ENCODE measurements at regions of chr3 and their contacts with region 1.

Region 1: DNA sequence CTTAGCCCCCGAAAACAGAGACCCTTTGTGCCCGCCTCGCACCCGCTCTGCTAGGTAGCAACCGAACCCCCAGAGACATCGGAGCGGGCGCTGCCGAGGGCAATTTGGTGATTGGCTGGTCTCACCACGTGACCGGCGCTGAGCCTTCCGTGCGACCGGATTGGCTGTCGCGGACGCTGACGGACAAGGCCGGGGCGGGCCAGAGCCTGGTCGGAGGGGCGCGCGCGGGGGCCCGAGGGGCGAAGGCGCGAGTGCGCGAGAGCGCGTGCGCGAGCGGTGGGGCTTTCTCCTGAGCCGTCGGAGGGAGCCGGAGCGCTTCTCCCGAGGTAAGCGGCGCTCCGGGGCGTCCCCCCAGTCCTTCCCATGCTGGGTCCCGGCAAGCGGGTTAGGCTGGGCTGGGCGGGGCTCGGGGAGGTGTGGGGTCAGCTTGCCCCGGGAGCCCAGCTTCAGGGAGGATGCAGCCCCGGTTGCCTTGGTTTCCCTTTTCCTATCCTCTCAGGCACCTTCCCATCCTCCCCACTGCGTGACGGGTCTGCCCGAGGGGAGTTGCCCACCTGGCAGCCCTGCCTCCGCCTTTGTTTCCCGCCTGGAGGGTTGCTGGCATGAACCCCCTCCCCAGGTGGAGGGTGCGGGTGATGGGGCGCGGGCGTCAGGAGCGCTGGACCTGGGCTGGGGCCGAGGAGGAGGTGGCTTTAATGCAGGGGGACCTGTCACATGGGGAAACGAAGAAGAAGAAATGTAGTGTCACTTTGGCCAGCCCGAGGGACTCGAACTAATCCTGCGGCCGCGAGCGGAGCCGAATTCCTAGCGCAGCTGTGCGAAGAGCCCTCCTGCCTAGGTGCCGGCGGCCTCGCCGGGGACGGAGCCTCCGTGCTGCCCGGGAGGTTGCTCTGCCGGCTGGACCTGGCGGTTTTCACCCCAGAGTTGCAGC is at the start of gene TMEM108:
- DNase-seq: peak; percentile 41 to 73
- H3K4me3 ChIP-seq: peak within 1 kb of the TSS; percentile 52 to 62
- H3K27ac ChIP-seq: no peak within 1 kb of the TSS
- H3K4me1 ChIP-seq: peaks cover 0 to 30% (median 16%) of the 10 kb centered on the region in 4 donors
- H3K27me3 ChIP-seq: peaks cover 0 to 29% of the 10 kb centered on the region in 2 donors
- CTCF ChIP-seq: no peak

Region 2: DNA sequence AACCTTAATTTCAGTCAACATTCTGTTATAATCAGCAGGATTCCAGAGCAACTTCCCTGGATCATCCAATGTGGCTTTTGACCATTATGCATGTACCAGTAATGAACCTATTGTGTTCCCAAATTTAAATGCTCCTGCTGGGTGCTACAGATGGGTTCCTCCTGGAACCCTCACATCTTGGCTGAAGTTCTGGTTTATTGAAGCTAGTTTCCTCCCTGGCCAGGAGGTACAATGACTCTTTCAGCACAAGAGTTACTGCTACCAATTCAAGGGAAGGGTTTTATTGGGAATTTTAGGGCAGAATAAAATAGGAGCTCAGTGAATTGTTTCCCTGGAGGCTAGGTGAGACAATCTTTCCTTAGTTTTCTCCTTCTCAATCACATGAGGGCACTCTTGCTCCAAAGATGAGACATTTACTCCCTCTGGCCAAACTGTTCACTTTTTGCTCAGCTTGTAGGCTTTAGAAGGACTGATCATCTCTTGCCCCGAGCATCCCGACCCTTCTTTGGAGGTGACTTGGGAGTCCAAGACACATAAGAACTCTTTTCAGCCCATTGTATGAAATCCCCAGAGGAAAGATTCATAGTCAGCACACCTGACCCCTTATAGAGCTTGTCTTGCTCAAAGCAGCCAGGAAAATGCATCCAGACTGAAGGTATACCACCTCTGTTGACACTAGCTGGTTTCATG is 307.3 kb before region 1 on chr3:
- intact Hi-C with region 1: loop called (anchors 10 kb)
- DNase-seq: no peak
- H3K4me3 ChIP-seq: no peak overlapping the region
- H3K27ac ChIP-seq: no peak overlapping the region
- H3K4me1 ChIP-seq: peaks cover 0 to 6% (median 2%) of the 10 kb centered on the region in 4 donors
- H3K27me3 ChIP-seq: no peaks in the 10 kb centered on the region
- CTCF ChIP-seq: peak; percentile 39 to 44

Region 3: GRCh38 chr3:133152056-133152455 is 113.7 kb after region 1 on chr3:
- intact Hi-C with region 1: no loop called
- DNase-seq: no peak
- H3K4me3 ChIP-seq: no peak overlapping the region
- H3K27ac ChIP-seq: no peak overlapping the region
- H3K4me1 ChIP-seq: no peaks in the 10 kb centered on the region
- H3K27me3 ChIP-seq: no peaks in the 10 kb centered on the region
- CTCF ChIP-seq: no peak

Region 4: GRCh38 chr3:133384331-133385027 is 346.1 kb after region 1 on chr3:
- intact Hi-C with region 1: loop called (anchors 10 kb)
- DNase-seq: peak in 1 of 2 donors; percentile 28
- H3K4me3 ChIP-seq: no peak overlapping the region
- H3K27ac ChIP-seq: no peak overlapping the region
- H3K4me1 ChIP-seq: peaks cover 0 to 9% (median 0%) of the 10 kb centered on the region in 4 donors
- H3K27me3 ChIP-seq: peaks cover 0 to 3% of the 10 kb centered on the region in 2 donors
- CTCF ChIP-seq: peak; percentile 54 to 62